GM13976 (cell line): ENCODE measurements at regions of chr14 and their contacts with region 1.

Region 1: DNA sequence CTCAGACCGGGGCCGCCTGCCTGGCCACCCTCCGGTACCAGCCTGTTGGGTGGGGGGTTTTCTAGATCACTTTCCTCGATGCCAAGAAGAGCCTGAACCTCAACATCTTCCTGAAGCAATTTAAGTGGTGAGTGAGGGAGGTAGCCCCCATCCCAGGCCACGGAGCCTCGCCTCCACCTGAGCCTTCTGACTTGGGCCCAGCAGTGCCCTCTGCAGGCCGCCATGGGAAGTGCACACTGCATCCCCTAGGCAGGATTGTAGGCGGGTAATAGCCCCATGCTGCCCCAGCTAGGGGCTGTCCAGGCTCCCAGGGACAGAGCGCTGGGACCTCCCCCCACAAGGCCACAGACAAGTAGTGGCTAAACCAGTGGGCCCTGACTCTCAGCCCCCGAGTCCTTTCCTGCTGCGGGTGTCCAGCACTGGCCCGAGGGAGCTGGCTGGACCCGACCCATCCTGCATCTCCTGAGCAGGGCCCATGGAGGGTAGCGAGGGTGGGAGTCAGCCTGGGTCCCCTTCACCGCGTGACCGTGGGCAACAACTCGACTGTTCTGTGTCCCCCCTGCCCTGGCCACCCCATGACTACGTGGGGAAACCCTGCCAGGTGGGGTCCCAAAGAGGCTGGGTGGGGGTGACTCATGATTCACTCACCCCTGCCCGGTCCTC is 15.3 kb upstream of the ADSS1 start:
- DNase-seq: peak; percentile 96
- CTCF ChIP-seq: peak; percentile 98

Region 2: GRCh38 chr14:104639889-104640548 is 68.7 kb before region 1 on chr14:
- in situ Hi-C with region 1: loop called (anchors 10 kb)
- DNase-seq: peak; percentile 90
- CTCF ChIP-seq: peak; percentile 94